CD8-positive, alpha-beta T cell (primary cell): ENCODE measurements at regions of chr1 and their contacts with region 1.

Region 1: GRCh38 chr1:183537405-183537804 is 52.9 kb downstream of the NCF2 start:
- DNase-seq: no peak
- ATAC-seq: no peak
- H3K4me3 ChIP-seq: no peak overlapping the region
- H3K4me3 Mint-ChIP-seq: no peak overlapping the region
- H3K27ac ChIP-seq: no peak overlapping the region
- H3K27ac Mint-ChIP-seq: no peak overlapping the region
- H3K4me1 ChIP-seq: no peaks in the 10 kb centered on the region
- H3K4me1 Mint-ChIP-seq: peaks cover 4% of the 10 kb centered on the region
- H3K27me3 ChIP-seq: no peaks in the 10 kb centered on the region
- H3K27me3 Mint-ChIP-seq: no peaks in the 10 kb centered on the region
- CTCF ChIP-seq: no peak

Region 2: DNA sequence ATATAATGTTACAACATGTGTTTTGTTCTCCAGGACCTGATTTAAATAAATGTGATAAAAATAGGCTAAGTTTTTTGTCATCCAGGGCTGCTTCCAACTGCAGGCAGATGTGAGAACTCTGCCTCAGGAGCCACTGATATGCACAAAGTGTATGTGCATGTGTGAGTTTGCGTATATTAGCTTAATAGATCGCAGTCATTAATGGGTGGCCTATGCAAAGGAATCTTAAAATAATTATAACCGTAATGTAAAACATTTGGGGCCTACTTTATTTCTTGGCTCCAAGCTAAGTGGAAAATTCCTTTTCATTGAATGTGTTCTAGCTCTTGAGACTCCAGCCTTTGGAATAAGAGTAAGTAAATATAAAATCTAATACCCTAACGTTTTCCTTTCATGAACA is 681.5 kb before region 1 on chr1:
- CTCF ChIA-PET with region 1: no interaction called
- POLR2A ChIA-PET with region 1: no interaction called
- intact Hi-C with region 1: loop called in 1 of 2 experiments (anchors 10 kb)
- DNase-seq: no peak
- ATAC-seq: no peak
- H3K4me3 ChIP-seq: no peak overlapping the region
- H3K4me3 Mint-ChIP-seq: no peak overlapping the region
- H3K27ac ChIP-seq: no peak overlapping the region
- H3K27ac Mint-ChIP-seq: no peak overlapping the region
- H3K4me1 ChIP-seq: no peaks in the 10 kb centered on the region
- H3K4me1 Mint-ChIP-seq: peaks cover 7% of the 10 kb centered on the region
- H3K27me3 ChIP-seq: no peaks in the 10 kb centered on the region
- H3K27me3 Mint-ChIP-seq: no peaks in the 10 kb centered on the region
- CTCF ChIP-seq: no peak

Region 3: GRCh38 chr1:182889997-182890396 is 647.4 kb before region 1 on chr1:
- CTCF ChIA-PET with region 1: no interaction called
- POLR2A ChIA-PET with region 1: no interaction called
- intact Hi-C with region 1: loop called in 1 of 2 experiments (anchors 10 kb)
- DNase-seq: peak in 7 of 9 experiments; percentile 9 to 62 (median 43)
- ATAC-seq: peak; percentile 78
- H3K4me3 ChIP-seq: no peak overlapping the region
- H3K4me3 Mint-ChIP-seq: no peak overlapping the region
- H3K27ac ChIP-seq: peak overlapping the region in 1 of 2 experiments; percentile 39
- H3K27ac Mint-ChIP-seq: peak overlapping the region; percentile 39
- H3K4me1 ChIP-seq: peaks cover 13% of the 10 kb centered on the region
- H3K4me1 Mint-ChIP-seq: peaks cover 20% of the 10 kb centered on the region
- H3K27me3 ChIP-seq: no peaks in the 10 kb centered on the region
- H3K27me3 Mint-ChIP-seq: peaks cover 2% of the 10 kb centered on the region
- CTCF ChIP-seq: no peak

Region 4: DNA sequence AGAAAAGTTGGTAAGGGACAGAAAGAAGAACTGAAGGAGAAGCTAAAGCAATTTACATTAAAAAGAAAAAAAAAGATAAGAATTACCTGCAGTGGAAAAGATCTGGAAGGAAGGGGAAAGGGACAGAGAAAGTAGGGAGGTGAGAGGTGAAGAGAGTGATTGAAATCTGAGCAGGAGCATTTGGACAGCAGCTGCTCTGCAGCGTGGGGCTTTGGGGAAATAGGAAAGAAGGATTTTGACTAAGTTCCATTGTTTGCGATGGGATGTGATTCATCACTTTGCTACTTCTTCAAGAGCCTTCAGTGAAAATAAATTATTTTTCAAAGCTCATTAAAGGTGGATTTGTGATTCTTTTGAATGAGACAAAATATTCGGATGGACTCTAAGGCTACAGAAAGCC is 93.2 kb before region 1 on chr1:
- CTCF ChIA-PET with region 1: no interaction called
- POLR2A ChIA-PET with region 1: no interaction called
- intact Hi-C with region 1: no loop called
- DNase-seq: no peak
- ATAC-seq: no peak
- H3K4me3 ChIP-seq: no peak overlapping the region
- H3K4me3 Mint-ChIP-seq: no peak overlapping the region
- H3K27ac ChIP-seq: no peak overlapping the region
- H3K27ac Mint-ChIP-seq: no peak overlapping the region
- H3K4me1 ChIP-seq: no peaks in the 10 kb centered on the region
- H3K4me1 Mint-ChIP-seq: no peaks in the 10 kb centered on the region
- H3K27me3 ChIP-seq: no peaks in the 10 kb centered on the region
- H3K27me3 Mint-ChIP-seq: no peaks in the 10 kb centered on the region
- CTCF ChIP-seq: no peak